ENCODE measurements at regions of chr5 and their contacts with region 1.

Region 1: DNA sequence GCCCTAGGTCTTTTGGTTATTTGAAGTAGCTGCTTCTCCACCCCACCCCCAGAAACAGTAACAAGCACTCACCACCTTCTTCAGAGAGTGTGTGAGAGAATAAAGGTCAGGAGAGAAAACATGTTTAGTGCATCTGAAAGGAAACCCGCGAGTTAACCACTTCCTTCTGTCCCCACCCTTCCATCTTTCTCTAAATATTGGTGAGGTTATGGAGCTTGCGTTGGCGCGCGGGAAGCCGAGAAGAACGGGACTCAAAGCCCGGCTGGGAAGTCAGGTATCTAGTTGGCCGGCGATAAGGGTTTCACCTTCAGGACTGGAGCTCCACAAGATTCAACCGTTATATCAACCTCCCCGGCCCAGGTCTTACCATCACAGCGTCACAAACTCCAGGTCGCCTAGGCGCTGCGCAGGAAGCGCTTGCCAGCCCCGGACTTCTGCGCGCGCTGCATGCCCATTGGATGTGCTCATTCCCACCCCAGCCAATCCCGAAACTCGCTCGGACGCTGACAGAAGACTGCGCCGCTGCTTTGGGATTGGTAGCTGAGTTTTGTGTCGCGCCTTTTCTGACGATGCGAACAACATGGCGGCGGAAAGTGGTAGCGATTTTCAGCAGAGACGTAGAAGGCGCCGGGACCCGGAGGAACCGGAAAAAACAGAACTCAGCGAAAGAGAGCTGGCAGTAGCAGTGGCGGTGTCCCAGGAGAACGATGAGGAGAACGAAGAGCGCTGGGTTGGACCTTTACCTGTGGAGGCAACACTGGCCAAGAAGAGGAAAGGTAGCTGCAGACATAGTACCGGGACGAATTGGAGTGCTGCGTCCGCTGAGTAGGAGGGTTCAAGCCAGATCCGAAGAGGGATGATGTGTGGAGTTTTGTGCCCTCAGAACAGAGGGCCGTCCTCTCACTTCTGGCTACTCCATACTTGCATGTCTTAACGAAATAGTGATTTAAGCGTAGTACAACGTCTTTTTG is at the starts of genes CENPK and PPWD1:
- DNase-seq: peak; percentile 90 to 95
- ATAC-seq: peak; percentile 99 to 100 (median 100)
- H3K4me3 ChIP-seq: peak within 1 kb of the TSS; percentile 63 to 96 (median 78)
- H3K27ac ChIP-seq: peak within 1 kb of the TSS; percentile 73 to 92 (median 82)
- H3K4me1 ChIP-seq: peaks cover 2 to 38% (median 28%) of the 10 kb centered on the region in 9 donors
- H3K27me3 ChIP-seq: no peaks in the 10 kb centered on the region
- CTCF ChIP-seq: no peak
- total RNA-seq, gene CENPK: 0.19 to 3.5 (median 0.62) TPM
- total RNA-seq, gene PPWD1: 14.1 to 22.3 (median 16.2) TPM

Region 2: GRCh38 chr5:64161420-64161819 is 1401.6 kb before region 1 on chr5:
- intact Hi-C with region 1: loop called in 1 of 10 experiments (anchors 5 kb)
- DNase-seq: no peak
- ATAC-seq: no peak
- H3K4me3 ChIP-seq: no peak overlapping the region
- H3K27ac ChIP-seq: no peak overlapping the region
- H3K4me1 ChIP-seq: peaks cover 0 to 19% (median 8%) of the 10 kb centered on the region in 9 donors
- H3K27me3 ChIP-seq: peaks cover 0 to 31% (median 0%) of the 10 kb centered on the region in 7 donors
- CTCF ChIP-seq: no peak

Region 3: DNA sequence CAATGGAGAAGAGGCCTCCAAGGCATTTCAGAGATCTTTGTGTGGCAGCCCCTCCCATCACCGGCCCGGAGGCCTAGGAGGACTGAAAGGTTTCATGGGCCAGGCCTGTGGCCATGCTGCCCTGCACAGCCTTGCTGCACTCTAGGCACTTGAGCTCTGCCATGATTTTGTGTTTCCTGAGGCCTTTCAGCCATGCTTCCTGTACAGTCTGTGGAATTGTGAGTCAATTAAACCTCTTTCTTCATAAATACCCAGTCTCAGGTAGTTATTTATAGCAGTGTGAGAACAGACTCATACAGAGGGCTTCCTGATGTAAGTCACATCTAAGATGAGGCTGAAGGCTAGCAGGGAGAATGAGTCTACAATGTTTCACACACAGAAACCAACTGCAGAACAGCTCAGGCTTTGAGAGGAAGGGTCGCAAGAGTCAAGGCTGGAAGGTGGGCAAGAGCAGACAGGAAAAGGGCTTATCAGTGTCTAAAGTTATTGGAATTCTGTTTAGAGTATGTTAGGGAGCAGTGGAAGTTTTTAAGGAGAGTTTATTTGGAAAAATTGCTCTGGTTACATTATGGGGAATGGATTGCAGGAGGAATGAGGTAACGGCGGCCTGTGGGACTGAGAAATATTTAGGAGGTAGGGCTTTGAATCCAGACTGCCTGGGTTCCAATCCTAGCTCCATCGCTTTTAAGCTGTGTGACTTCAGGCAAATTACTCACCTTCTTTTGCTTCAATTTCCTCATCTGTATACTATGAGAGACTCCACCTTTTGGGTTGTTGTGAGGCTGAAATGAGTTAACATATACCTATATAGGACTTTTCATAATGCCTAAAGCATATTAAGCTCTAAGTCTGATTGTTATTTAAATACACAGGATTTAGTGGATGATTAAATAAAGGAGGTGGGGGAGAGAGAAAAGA is 503.1 kb before region 1 on chr5:
- intact Hi-C with region 1: no loop called
- DNase-seq: no peak
- ATAC-seq: no peak
- H3K4me3 ChIP-seq: no peak overlapping the region
- H3K27ac ChIP-seq: no peak overlapping the region
- H3K4me1 ChIP-seq: peaks cover 0 to 20% (median 18%) of the 10 kb centered on the region in 9 donors
- H3K27me3 ChIP-seq: no peaks in the 10 kb centered on the region
- CTCF ChIP-seq: no peak

Region 4: DNA sequence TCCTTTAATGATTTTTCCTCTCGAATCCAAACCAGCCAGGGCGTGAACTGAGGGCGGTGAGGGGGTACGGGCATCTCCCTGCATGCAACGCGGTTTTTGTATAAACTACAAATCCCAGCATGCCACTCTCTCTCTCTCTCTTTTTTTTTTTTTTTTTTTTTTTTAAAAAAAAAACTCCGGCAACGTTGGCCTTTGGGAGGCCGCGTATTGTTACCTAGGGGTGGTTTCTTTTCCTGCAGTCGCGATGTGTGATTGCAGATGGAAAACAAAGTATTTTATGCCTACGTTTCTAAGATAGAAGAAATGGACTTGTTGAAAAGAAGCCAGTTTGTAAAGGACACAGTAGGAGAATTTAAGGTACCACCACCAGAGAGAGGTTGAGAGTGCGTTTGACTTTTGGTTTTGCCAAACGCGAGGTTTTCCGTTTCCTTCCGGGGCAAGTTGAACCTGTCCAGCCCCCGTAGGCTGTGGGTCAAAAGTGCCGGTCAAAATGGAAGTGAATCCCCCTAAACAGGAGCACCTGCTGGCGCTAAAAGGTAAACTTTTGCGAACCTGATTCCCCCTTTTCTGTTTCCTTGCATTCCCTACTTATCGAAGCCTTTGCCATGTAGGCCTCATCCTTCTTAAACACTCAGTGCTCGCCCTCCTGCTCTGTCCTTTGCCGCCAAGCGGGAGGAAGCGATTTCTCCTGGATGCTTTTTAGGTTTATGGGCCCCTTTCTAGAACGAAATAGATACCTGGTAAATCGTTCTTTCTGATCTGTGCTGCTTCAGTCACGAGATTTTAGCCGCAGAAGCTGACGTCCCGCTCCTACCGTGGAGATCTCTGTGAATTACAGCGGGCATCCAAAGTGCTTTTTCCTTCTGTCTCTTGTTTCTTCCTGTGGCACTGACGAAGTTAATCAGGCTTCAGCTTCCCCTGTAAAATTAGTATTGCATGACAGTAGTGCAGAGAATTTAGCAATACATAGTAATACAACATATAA is 61.8 kb after region 1 on chr5 and contains the starts of genes SHLD3 and TRAPPC13:
- intact Hi-C with region 1: loop called in 1 of 10 experiments (anchors 5 kb)
- DNase-seq: peak; percentile 60 to 88
- ATAC-seq: peak; percentile 90 to 96 (median 92)
- H3K4me3 ChIP-seq: peak within 1 kb of the TSS; percentile 71 to 100 (median 87)
- H3K27ac ChIP-seq: peak within 1 kb of the TSS; percentile 72 to 94 (median 90)
- H3K4me1 ChIP-seq: peaks cover 4 to 46% (median 39%) of the 10 kb centered on the region in 9 donors
- H3K27me3 ChIP-seq: no peaks in the 10 kb centered on the region
- CTCF ChIP-seq: peak in 2 of 9 donors; percentile 6 to 7
- total RNA-seq, gene SHLD3: 1.1 to 2.2 (median 1.8) TPM
- total RNA-seq, gene TRAPPC13: 17.7 to 26.3 (median 20.6) TPM